GM23248 (cell line): ENCODE measurements at regions of chr13 and their contacts with region 1.

Region 1: GRCh38 chr13:65868889-65869288 is 1361.2 kb downstream of the PCDH9 start:
- DNase-seq: no peak
- H3K4me3 ChIP-seq: no peak overlapping the region
- H3K27ac ChIP-seq: no peak overlapping the region
- H3K4me1 ChIP-seq: no peaks in the 10 kb centered on the region
- H3K27me3 ChIP-seq: no peaks in the 10 kb centered on the region

Region 2: GRCh38 chr13:65353951-65354350 is 514.9 kb before region 1 on chr13:
- in situ Hi-C with region 1: no loop called
- DNase-seq: no peak
- H3K4me3 ChIP-seq: no peak overlapping the region
- H3K27ac ChIP-seq: no peak overlapping the region
- H3K4me1 ChIP-seq: no peaks in the 10 kb centered on the region
- H3K27me3 ChIP-seq: no peaks in the 10 kb centered on the region

Region 3: DNA sequence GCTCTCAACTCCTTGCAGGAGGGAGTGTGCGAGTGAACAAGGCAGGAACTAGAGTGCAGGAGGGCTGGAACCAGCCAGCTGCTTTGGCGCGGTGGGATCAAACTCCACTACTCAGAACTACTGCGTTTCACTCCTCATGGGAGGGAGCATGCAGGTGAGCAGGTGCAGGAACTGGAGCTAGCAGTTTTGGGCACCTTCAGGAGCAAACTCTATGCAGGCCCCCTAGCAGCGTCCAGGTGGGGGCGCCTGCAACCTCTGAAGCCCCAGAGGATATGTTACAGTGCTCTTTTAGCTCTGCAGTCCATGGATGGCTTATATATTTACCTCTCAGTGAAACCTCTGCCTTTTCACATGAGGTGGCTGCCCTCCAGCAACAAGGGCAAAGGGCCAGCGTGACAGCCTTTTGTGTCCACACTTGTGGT is 57.9 kb after region 1 on chr13:
- in situ Hi-C with region 1: loop called (anchors 10 kb)
- DNase-seq: no peak
- H3K4me3 ChIP-seq: no peak overlapping the region
- H3K27ac ChIP-seq: no peak overlapping the region
- H3K4me1 ChIP-seq: no peaks in the 10 kb centered on the region
- H3K27me3 ChIP-seq: no peaks in the 10 kb centered on the region